ENCODE measurements at regions of chr4 and their contacts with region 1.

Region 1: GRCh38 chr4:87848622-87849351 is 16.0 kb downstream of the MEPE start:
- DNase-seq: peak; percentile 42 to 75 (median 58)
- H3K4me3 ChIP-seq: no peak overlapping the region
- H3K27ac ChIP-seq: no peak overlapping the region
- H3K4me1 ChIP-seq: peaks cover 11 to 12% of the 10 kb centered on the region in 2 donors
- H3K27me3 ChIP-seq: no peaks in the 10 kb centered on the region
- CTCF ChIP-seq: peak in 5 of 6 experiments; percentile 30 to 64 (median 61)
- POLR2A ChIP-seq: no peak

Region 2: GRCh38 chr4:87543835-87544461 is 304.8 kb before region 1 on chr4:
- intact Hi-C with region 1: loop called (anchors 10 kb)
- DNase-seq: peak in 6 of 7 donors; percentile 22 to 45 (median 30)
- H3K4me3 ChIP-seq: no peak overlapping the region
- H3K27ac ChIP-seq: no peak overlapping the region
- H3K4me1 ChIP-seq: peaks cover 0 to 5% of the 10 kb centered on the region in 2 donors
- H3K27me3 ChIP-seq: no peaks in the 10 kb centered on the region
- CTCF ChIP-seq: peak; percentile 21 to 58 (median 52)
- POLR2A ChIP-seq: no peak

Region 3: GRCh38 chr4:87688316-87688715 is 160.5 kb before region 1 on chr4:
- intact Hi-C with region 1: loop called in 1 of 2 experiments (anchors 5 kb)
- DNase-seq: no peak
- H3K4me3 ChIP-seq: no peak overlapping the region
- H3K27ac ChIP-seq: no peak overlapping the region
- H3K4me1 ChIP-seq: no peaks in the 10 kb centered on the region
- H3K27me3 ChIP-seq: no peaks in the 10 kb centered on the region
- CTCF ChIP-seq: no peak
- POLR2A ChIP-seq: no peak

Region 4: GRCh38 chr4:88097301-88097700 is 248.5 kb after region 1 on chr4:
- intact Hi-C with region 1: no loop called
- DNase-seq: no peak
- H3K4me3 ChIP-seq: no peak overlapping the region
- H3K27ac ChIP-seq: no peak overlapping the region
- H3K4me1 ChIP-seq: no peaks in the 10 kb centered on the region
- H3K27me3 ChIP-seq: no peaks in the 10 kb centered on the region
- CTCF ChIP-seq: no peak
- POLR2A ChIP-seq: no peak

Region 5: GRCh38 chr4:88341227-88342192 is 492.7 kb after region 1 on chr4:
- intact Hi-C with region 1: no loop called
- DNase-seq: peak in 2 of 7 donors; percentile 17 to 52
- H3K4me3 ChIP-seq: no peak overlapping the region
- H3K27ac ChIP-seq: no peak overlapping the region
- H3K4me1 ChIP-seq: no peaks in the 10 kb centered on the region
- H3K27me3 ChIP-seq: no peaks in the 10 kb centered on the region
- CTCF ChIP-seq: no peak
- POLR2A ChIP-seq: no peak